A673 (cell line): ENCODE measurements at regions of chr12 and their contacts with region 1.

Region 1: GRCh38 chr12:53757095-53757770 is 5.5 kb upstream of the CISTR start:
- DNase-seq: peak; percentile 86
- H3K4me3 ChIP-seq: no peak overlapping the region
- H3K27ac ChIP-seq: no peak overlapping the region
- H3K4me1 ChIP-seq: peaks cover 51% of the 10 kb centered on the region
- H3K27me3 ChIP-seq: no peaks in the 10 kb centered on the region
- CTCF ChIP-seq: peak; percentile 96

Region 2: DNA sequence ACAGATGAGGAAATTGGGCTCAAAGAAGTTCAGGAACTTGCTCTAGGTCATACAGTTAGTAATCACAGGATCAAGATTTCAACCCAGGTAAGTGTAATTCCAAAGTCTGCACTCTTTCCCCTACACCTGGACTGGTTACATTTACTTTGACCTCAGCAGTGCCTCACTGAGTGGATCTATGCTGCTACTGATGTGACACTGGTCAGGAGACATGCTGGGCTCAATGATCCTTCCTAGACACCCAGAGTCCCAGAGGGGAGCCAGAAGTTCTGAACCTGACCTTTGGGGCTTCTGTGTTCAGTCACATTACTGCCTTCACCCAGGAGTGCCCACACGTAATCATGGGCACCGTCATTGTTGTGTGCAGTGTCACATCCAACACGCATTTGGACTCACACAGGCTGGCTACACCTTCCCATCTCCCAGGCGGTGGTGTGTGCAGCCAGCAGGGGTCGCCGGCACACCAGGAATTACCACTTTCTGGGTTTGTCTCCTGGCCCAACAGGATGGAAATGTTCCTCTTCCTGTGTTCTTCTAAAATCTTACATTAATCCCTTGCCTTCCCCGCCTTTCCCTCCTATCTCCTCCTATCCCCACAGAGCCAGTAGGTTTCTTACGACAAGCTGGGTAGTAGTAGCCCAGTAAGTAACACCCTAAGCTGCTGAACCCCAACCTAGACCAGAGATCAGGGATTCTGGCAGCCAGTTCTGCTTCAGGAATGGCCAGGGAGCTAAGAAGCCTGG is 55.5 kb before region 1 on chr12:
- CTCF ChIA-PET with region 1: interaction called, 14 read pairs
- POLR2A ChIA-PET with region 1: interaction called, 8 read pairs
- intact Hi-C with region 1: no loop called
- DNase-seq: peak; percentile 85
- H3K4me3 ChIP-seq: no peak overlapping the region
- H3K27ac ChIP-seq: no peak overlapping the region
- H3K4me1 ChIP-seq: peaks cover 15% of the 10 kb centered on the region
- H3K27me3 ChIP-seq: no peaks in the 10 kb centered on the region
- CTCF ChIP-seq: peak; percentile 98

Region 3: GRCh38 chr12:54075974-54076373 is 318.7 kb after region 1 on chr12:
- CTCF ChIA-PET with region 1: no interaction called
- POLR2A ChIA-PET with region 1: no interaction called
- intact Hi-C with region 1: no loop called
- DNase-seq: no peak
- H3K4me3 ChIP-seq: no peak overlapping the region
- H3K27ac ChIP-seq: no peak overlapping the region
- H3K4me1 ChIP-seq: peaks cover 6% of the 10 kb centered on the region
- H3K27me3 ChIP-seq: no peaks in the 10 kb centered on the region
- CTCF ChIP-seq: no peak

Region 4: DNA sequence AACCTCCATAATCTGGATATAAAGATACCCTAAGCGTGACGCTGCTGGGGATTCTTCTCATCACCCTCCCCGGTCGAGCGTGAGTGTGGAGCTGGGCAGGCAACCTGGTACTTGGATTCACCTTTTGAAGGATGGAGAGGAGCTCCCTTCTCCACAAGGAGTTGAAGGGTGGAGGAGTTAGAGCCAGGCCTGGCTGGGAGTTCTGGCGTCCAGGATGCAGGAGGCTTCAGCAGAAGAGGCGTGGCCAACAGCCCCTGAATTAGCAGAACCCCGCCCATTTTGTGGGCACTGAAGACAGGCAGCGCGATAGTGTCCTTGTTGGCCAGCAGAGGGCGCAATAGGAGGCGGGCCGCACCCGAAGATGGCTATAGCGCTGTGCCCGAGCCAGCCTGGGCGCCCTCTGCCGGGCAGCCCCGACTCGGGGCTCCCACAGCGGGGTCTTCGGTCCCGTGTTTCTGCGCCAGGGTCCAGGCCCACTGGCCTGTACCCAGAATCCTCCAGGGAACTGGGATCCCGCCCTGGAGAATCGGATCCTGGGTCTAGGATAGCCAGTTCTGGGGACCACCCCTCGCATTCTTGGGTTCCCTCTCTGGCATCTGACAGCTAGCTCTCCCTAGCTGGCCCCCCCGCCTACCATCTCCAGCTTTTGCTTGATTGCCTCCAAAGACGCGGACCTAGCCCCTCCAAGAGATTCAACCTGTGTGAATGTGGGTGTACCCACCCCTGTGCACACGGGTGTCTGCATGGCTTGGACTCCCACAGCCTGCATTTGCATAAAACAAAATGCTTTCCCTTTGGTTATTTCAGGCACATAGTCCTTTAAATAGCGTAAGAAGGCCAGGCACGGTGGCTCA is 457.5 kb after region 1 on chr12:
- CTCF ChIA-PET with region 1: interaction called, 10 read pairs
- POLR2A ChIA-PET with region 1: no interaction called
- intact Hi-C with region 1: no loop called
- DNase-seq: peak; percentile 96
- H3K4me3 ChIP-seq: peak overlapping the region; percentile 31
- H3K27ac ChIP-seq: no peak overlapping the region
- H3K4me1 ChIP-seq: peaks cover 19% of the 10 kb centered on the region
- H3K27me3 ChIP-seq: no peaks in the 10 kb centered on the region
- CTCF ChIP-seq: peak; percentile 100